Ovary (tissue), 10 donors: ENCODE measurements at regions of chr3 and their contacts with region 1.

Region 1: GRCh38 chr3:196317687-196318467 is at the start of gene DYNLT2B:
- DNase-seq: peak; percentile 85 to 91 (median 87)
- H3K4me3 ChIP-seq: peak within 1 kb of the TSS; percentile 91
- H3K27ac ChIP-seq: peak within 1 kb of the TSS; percentile 85 to 99
- H3K4me1 ChIP-seq: no peaks in the 10 kb centered on the region
- H3K27me3 ChIP-seq: no peaks in the 10 kb centered on the region
- CTCF ChIP-seq: peak in 1 of 3 donors; percentile 6
- EP300 ChIP-seq: no peak
- POLR2A ChIP-seq: peak; percentile 48
- total RNA-seq, gene DYNLT2B: 7.7 to 30.2 (median 9.5) TPM

Region 2: GRCh38 chr3:196502775-196503195 is 184.9 kb after region 1 on chr3:
- intact Hi-C with region 1: loop called in 1 of 4 experiments (anchors 10 kb)
- DNase-seq: peak; percentile 62 to 75 (median 62)
- H3K4me3 ChIP-seq: peak overlapping the region; percentile 97
- H3K27ac ChIP-seq: peak overlapping the region; percentile 82 to 91
- H3K4me1 ChIP-seq: peaks cover 3% of the 10 kb centered on the region
- H3K27me3 ChIP-seq: no peaks in the 10 kb centered on the region
- CTCF ChIP-seq: no peak
- EP300 ChIP-seq: no peak
- POLR2A ChIP-seq: no peak

Region 3: GRCh38 chr3:196537319-196537984 is 219.6 kb after region 1 on chr3:
- intact Hi-C with region 1: no loop called
- DNase-seq: peak in 3 of 5 donors; percentile 13 to 24 (median 20)
- H3K4me3 ChIP-seq: no peak overlapping the region
- H3K27ac ChIP-seq: no peak overlapping the region
- H3K4me1 ChIP-seq: no peaks in the 10 kb centered on the region
- H3K27me3 ChIP-seq: no peaks in the 10 kb centered on the region
- CTCF ChIP-seq: no peak
- EP300 ChIP-seq: no peak
- POLR2A ChIP-seq: no peak